ENCODE measurements at regions of chr2 and their contacts with region 1.

Region 1: DNA sequence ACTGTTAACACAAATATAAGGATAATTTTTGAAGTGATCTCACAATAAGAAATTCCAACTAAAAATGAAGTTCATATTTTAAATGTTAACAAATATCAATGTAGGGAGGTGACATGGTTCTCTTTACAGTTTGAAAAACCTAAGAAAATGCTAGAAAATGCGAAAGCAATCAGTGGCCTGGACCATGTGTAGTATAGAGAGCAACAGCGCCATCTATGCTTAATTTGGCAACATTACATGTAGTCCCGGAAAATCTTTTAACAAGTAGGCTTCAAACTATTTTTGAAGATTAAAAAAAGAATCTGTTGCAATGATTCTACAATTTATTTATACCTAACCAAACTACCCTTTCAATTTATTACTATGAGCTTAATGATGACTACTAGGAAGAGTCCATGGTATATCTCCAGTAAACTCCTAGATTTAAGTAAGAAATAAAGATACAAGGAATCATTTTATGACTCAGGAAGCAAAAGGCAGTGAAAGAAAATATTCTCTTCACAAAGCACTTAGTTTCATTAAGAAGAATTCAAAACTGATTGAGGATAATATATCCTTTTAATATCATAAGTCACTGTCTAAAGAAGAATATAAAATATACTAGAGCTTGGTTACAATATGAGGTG is 33.3 kb downstream of the NDUFA10 start:
- DNase-seq: peak; percentile 16
- H3K4me3 ChIP-seq: no peak overlapping the region
- CTCF ChIP-seq: peak; percentile 62

Region 2: GRCh38 chr2:239143858-239144718 is 847.7 kb before region 1 on chr2:
- CTCF ChIA-PET with region 1: interaction called, 23 read pairs
- POLR2A ChIA-PET with region 1: no interaction called
- DNase-seq: no peak
- H3K4me3 ChIP-seq: no peak overlapping the region
- CTCF ChIP-seq: peak; percentile 84

Region 3: DNA sequence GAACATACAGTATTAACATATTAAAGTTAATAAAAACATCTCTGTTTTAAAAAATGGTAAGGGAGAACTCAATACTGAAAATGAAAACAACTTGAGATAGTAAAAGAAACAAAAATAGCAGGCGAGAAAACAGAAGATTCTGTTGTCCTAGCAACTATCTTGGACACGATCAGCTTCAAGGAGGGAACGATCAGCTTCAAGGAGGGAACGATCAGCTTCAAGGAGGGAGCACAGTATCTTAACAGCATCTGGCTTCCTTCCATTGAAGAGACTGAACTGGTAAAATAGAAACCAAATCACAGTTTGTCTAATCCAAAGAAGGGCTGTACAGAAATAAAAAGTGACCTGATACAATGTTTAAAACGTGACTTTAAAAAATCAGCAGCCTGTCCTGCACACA is 18.4 kb before region 1 on chr2:
- CTCF ChIA-PET with region 1: interaction called, 49 read pairs
- POLR2A ChIA-PET with region 1: no interaction called
- DNase-seq: no peak
- H3K4me3 ChIP-seq: no peak overlapping the region
- CTCF ChIP-seq: no peak

Region 4: DNA sequence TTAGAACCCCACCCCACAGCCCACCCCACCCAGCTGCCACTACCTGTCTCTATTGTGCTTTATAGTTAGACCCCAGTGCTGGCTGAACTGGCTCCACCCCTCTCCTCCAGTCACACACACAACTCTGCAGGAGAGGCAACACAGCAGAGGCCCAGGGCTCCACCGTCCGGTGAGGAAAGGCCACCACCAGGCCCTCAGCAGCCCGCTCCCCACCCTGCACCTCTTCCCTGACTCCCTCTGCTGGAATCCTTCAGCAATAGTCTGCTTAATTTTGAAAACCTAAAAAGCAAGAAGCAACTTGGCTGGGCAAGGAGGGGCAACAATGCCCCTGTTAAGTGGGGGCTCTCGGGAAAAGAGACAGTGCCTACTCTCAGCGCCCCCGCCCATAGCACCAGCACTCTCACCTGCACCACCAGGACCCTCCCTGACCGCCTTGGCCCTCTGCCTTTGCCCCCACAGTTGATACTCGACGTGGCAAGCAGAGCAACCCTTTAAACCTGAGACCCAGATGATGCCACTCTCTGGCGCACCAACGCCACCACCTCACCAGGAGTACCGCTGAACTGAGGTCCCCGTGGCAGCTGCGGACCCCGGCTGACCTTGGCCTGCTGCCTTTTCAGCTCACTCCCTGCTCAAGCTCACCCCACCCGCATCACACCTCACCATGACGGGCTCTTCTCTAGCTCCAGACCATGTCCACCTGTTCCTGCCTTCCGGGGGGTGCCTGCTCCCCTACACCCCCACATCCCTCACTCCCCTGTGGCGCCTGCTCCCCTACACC is 12.4 kb before region 1 on chr2:
- CTCF ChIA-PET with region 1: interaction called, 49 read pairs
- POLR2A ChIA-PET with region 1: no interaction called
- DNase-seq: no peak
- H3K4me3 ChIP-seq: no peak overlapping the region
- CTCF ChIP-seq: peak; percentile 21

Region 5: GRCh38 chr2:240002983-240003382 is 11.2 kb after region 1 on chr2:
- CTCF ChIA-PET with region 1: interaction called, 87 read pairs
- POLR2A ChIA-PET with region 1: no interaction called
- DNase-seq: no peak
- H3K4me3 ChIP-seq: no peak overlapping the region
- CTCF ChIP-seq: no peak